Mammary epithelial cell (primary cell): ENCODE measurements at regions of chr16 and their contacts with region 1.

Region 1: GRCh38 chr16:1119766-1120576 is 23.9 kb upstream of the C1QTNF8 start:
- DNase-seq: no peak
- H3K4me3 ChIP-seq: no peak overlapping the region
- H3K27ac ChIP-seq: no peak overlapping the region
- H3K4me1 ChIP-seq: peaks cover 3% of the 10 kb centered on the region
- H3K27me3 ChIP-seq: no peaks in the 10 kb centered on the region
- CTCF ChIP-seq: no peak

Region 2: GRCh38 chr16:1194665-1195392 is 74.9 kb after region 1 on chr16:
- CTCF ChIA-PET with region 1: no interaction called
- dilution Hi-C with region 1: no loop called
- in situ Hi-C with region 1: loop called in 1 of 2 experiments (anchors 10 kb)
- intact Hi-C with region 1: no loop called
- DNase-seq: no peak
- H3K4me3 ChIP-seq: no peak overlapping the region
- H3K27ac ChIP-seq: no peak overlapping the region
- H3K4me1 ChIP-seq: no peaks in the 10 kb centered on the region
- H3K27me3 ChIP-seq: no peaks in the 10 kb centered on the region
- CTCF ChIP-seq: peak; percentile 25 to 73

Region 3: DNA sequence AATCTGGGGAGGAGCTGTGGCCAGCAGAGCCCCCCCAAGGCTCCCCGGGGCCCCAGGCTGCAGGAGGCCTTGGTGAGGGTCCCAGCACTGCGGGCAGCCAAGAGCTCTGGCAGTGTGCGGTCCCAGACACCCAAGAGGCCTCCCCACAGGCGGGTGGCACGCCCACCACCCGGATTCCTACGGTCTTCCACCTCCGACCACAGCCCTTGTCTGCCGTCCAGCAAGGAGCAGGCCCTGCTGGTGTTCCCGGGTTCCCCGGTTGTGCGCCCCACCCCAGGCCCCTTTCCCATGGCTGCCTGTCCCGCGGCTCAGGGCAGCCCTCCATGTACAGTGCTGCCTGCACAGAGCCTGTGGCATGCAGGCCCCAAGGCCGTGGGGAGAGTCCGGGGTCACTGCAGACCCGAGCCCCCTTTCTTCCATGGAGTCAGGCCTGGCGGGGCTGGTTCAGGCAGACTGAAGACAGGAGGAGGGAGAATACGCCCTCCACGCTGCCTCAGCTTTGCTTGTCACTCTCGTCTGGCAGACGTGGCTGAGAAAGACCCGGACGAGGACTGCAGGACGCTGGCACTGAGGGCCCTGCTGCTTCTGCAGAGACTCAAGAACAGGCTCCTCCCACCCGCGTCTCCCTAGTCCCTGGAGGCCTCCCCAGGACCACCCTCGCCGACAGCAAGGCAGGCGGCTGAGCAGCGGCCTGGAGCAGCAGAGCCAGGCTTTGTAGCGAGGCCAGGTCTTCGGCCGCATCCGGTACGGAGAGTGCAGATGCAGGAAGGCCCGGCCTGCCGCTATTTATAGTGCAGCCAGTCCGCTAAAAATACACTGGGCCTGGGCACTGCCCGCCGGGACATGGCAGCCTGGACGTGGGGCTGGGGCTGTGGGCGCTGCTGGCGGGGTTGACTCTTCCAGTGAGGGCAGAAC is 389.6 kb after region 1 on chr16:
- CTCF ChIA-PET with region 1: no interaction called
- dilution Hi-C with region 1: no loop called
- in situ Hi-C with region 1: no loop called
- intact Hi-C with region 1: no loop called
- DNase-seq: no peak
- H3K4me3 ChIP-seq: no peak overlapping the region
- H3K27ac ChIP-seq: no peak overlapping the region
- H3K4me1 ChIP-seq: no peaks in the 10 kb centered on the region
- H3K27me3 ChIP-seq: no peaks in the 10 kb centered on the region
- CTCF ChIP-seq: no peak